Aorta (tissue), 5 donors: ENCODE measurements at regions of chr15 and their contacts with region 1.

Region 1: DNA sequence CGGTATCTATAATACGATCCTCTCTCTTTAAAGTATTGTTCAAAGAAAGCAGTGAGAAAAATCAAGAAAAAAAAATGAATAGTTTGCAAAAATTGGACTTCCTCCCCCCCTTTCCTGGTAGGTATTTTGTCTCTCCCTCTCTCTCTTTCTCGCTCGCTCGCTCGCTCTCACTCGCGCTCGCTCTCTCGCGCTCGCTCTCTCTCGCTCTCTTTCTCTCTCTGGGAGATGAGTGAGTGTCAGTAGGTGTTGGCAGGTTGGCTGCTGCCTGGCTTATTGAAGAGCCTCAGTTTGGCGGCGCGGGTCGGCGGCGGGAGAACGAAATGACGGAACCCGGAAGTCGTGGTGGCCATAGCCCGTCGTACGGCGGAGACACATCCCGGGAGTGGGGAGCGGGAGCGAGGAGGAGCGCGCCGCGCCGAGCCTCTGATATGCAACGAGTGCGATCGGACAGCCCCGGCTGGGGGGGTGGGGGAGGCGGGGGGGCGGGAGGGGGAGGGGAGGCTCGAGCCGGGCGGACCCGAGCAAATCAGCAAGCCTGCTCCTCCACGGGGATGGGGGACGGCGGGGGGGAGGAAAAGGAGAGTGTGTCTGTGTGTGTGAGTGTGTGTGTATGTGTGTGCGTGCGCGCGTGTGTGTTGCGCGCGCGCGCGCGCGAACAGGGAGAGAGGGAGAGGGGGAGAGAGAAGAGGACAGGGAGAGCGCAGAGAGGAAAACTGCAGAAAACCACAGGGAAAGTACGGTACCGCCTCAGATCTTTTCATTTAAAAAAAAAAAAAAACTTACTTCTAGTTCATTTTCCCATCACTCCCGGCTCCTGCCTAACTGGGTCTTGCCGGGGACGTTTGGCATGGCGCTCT is at the start of gene MEIS2:
- DNase-seq: peak; percentile 92 to 97
- ATAC-seq: peak; percentile 86
- H3K4me3 ChIP-seq: peak within 1 kb of the TSS; percentile 79 to 99
- H3K27ac ChIP-seq: peak within 1 kb of the TSS; percentile 77 to 100
- H3K4me1 ChIP-seq: no peaks in the 10 kb centered on the region
- H3K27me3 ChIP-seq: no peaks in the 10 kb centered on the region
- total RNA-seq, gene MEIS2: 29.1 to 58.7 TPM

Region 2: GRCh38 chr15:36579792-36580431 is 520.4 kb before region 1 on chr15:
- intact Hi-C with region 1: loop called in 1 of 2 experiments (anchors 10 kb)
- DNase-seq: no peak
- ATAC-seq: peak; percentile 75
- H3K4me3 ChIP-seq: peak overlapping the region; percentile 46 to 70
- H3K27ac ChIP-seq: peak overlapping the region in 1 of 2 donors; percentile 1
- H3K4me1 ChIP-seq: no peaks in the 10 kb centered on the region
- H3K27me3 ChIP-seq: no peaks in the 10 kb centered on the region

Region 3: DNA sequence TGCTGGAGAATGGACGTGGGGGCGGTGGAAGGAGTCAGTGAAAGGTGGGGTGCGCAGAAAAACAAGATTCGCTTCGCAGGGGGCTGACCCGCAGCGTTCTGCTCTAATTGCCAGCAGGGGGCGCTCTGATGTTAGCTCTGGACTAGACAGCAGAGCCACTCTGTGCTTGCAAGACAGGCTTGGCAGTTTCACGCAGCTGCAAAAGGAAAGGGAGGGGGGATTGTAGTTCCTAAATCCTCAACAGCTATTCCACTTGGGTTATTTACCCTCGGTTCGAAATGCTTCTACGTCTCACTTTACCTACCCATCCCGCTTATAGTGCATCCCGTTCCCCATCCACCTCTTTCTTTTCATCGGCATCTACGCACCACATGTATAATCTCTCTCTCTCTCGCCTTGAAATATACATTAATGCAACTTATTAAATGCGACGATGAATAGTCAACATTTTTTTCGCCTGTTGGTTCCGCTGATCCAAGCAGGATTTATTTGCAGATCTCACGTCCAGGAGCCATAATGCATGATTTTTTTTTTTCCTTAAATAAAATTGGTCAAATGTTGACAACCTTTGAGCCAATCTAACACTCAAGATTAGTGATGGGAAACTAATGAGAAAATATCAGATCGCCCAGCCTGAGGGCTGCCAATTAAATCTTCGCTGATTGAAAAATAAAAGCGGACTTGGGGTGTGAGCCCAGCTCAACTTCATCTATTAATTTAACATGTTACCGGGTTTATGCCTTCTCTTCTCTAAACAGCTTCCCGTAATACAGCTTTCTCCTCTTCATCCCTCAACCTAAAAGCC is 216.4 kb before region 1 on chr15:
- intact Hi-C with region 1: loop called in 1 of 2 experiments (anchors 5 kb)
- DNase-seq: peak; percentile 90 to 94
- ATAC-seq: peak; percentile 90
- H3K4me3 ChIP-seq: peak overlapping the region; percentile 44 to 51
- H3K27ac ChIP-seq: no peak overlapping the region
- H3K4me1 ChIP-seq: no peaks in the 10 kb centered on the region
- H3K27me3 ChIP-seq: no peaks in the 10 kb centered on the region

Region 4: DNA sequence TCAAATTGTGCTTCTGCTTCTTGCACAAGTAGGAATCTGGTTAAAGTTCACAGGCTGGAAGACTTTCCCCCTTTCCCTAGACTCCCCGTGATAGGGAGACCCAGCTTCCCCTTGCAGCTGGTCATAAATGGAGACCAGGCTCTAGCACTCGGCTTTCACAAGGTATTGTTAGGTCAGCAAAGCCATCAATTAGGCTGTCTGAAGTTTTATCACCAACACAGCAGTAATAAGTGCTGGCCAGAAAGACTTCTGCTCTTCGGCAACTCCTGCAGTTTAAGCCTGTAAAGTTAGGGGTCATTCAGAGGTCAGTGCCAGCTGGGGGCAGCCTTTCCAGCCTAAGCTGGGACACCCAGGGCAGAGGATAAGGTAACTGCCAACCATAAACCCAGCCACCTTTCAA is 203.4 kb before region 1 on chr15:
- intact Hi-C with region 1: loop called in 1 of 2 experiments (anchors 10 kb)
- DNase-seq: no peak
- ATAC-seq: no peak
- H3K4me3 ChIP-seq: no peak overlapping the region
- H3K27ac ChIP-seq: no peak overlapping the region
- H3K4me1 ChIP-seq: no peaks in the 10 kb centered on the region
- H3K27me3 ChIP-seq: no peaks in the 10 kb centered on the region

Region 5: DNA sequence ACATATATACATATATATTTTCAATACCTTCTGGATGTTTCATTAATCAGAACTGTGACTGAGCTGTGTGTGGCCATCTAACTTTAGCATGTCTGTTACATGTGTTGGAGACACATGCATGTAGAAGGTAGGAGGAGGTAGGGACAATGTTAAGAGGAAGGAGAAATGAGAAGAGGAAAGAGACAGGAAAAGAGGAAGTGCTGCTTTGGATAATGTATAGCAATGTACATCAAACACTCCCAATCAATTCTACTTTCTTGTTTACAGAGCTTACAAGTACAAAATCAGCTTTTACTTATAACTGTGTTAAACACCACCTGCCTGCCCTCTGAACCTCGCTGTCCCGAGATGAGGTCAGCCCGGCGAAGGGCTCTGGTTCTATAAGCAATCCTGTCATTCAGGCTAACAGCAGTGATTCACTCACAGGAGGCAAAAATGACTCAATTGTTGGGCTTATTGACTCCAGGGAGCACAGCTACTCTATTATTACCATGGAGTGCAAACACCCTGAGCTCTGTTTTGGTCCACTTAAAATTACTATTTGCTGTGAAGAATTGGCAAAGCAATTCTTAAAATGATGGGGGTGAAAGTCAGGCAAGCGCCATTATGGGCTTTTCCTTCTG is 188.9 kb before region 1 on chr15:
- intact Hi-C with region 1: no loop called
- DNase-seq: no peak
- ATAC-seq: no peak
- H3K4me3 ChIP-seq: no peak overlapping the region
- H3K27ac ChIP-seq: no peak overlapping the region
- H3K4me1 ChIP-seq: no peaks in the 10 kb centered on the region
- H3K27me3 ChIP-seq: no peaks in the 10 kb centered on the region

Region 6: GRCh38 chr15:37015035-37015434 is 85.3 kb before region 1 on chr15:
- intact Hi-C with region 1: loop called (anchors 5 to 10 kb)
- DNase-seq: peak in 1 of 2 donors; percentile 52
- ATAC-seq: peak; percentile 59
- H3K4me3 ChIP-seq: no peak overlapping the region
- H3K27ac ChIP-seq: peak overlapping the region; percentile 12 to 59
- H3K4me1 ChIP-seq: peaks cover 2 to 5% of the 10 kb centered on the region in 2 donors
- H3K27me3 ChIP-seq: no peaks in the 10 kb centered on the region

Region 7: DNA sequence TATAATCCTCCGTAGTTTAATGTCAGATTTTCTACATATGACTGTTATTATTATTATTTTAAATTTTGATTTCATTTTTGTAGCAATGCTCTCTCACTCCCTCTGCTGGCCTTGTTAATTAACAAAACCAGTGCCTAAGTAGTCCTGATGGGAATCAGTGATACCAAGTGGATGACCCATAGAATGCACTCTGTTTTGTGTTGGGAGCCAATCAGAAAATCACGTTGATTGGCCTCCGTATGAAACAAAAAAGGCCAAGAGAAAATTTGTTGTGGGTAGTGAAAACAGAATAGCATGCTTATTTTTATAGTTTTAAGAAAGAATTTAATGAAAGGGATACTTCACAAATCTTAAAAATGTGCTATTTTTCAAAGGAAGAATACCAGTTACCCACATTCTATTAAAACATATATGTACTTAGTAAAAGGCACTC is 34.4 kb after region 1 on chr15:
- intact Hi-C with region 1: no loop called
- DNase-seq: no peak
- ATAC-seq: peak; percentile 85
- H3K4me3 ChIP-seq: no peak overlapping the region
- H3K27ac ChIP-seq: no peak overlapping the region
- H3K4me1 ChIP-seq: no peaks in the 10 kb centered on the region
- H3K27me3 ChIP-seq: no peaks in the 10 kb centered on the region